ENCODE measurements at regions of chr3 and their contacts with region 1.

Region 1: DNA sequence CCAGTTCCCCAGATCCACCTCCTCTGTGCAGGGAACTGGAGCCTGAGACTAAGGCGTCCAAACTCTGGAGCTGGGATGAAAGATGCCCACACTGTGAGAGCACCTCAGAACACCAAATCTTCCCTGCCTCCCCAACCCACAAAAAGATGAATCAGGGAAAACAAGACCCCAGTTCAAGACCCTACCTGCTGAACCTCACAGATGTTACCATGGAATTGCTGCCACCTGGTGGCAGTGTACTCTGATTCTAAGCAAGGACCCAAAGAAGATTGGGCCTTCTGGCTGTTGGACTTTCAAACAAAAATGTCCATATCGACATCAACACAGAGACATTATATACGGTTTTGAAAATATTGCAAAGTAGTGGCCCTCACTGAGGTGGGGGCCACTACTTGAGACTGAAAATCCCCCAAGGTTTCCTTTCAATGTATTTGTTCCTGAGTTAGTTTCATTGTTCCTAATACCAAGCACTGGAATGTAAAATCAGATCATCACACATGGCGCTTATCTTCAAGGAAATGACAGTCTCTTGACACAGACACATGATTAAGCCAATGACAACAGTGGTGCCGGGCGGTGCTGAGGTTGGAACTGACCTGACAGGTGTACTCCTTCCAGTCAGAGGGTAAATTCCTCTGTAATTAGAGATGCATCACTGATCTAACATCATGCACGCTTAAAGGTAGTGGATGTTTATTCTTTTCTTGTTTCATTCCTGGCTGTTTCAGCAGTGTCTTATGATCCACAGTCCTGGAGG is 67.6 kb downstream of the SLC6A11 start:
- DNase-seq: no peak
- ATAC-seq: no peak
- H3K4me3 ChIP-seq: no peak overlapping the region
- H3K27ac ChIP-seq: no peak overlapping the region
- H3K4me1 ChIP-seq: no peaks in the 10 kb centered on the region
- H3K27me3 ChIP-seq: peaks cover 14% of the 10 kb centered on the region
- CTCF ChIP-seq: peak; percentile 68

Region 2: GRCh38 chr3:10758304-10759061 is 125.2 kb before region 1 on chr3:
- CTCF ChIA-PET with region 1: interaction called, 3 read pairs
- POLR2A ChIA-PET with region 1: no interaction called
- in situ Hi-C with region 1: no loop called
- intact Hi-C with region 1: loop called (anchors 2 kb)
- DNase-seq: peak; percentile 38
- ATAC-seq: peak; percentile 94
- H3K4me3 ChIP-seq: no peak overlapping the region
- H3K27ac ChIP-seq: no peak overlapping the region
- H3K4me1 ChIP-seq: no peaks in the 10 kb centered on the region
- H3K27me3 ChIP-seq: peaks cover 3% of the 10 kb centered on the region; the same call in 1 of the 2 replicates
- CTCF ChIP-seq: peak; percentile 68

Region 3: GRCh38 chr3:10772271-10773161 is 111.1 kb before region 1 on chr3:
- CTCF ChIA-PET with region 1: no interaction called
- POLR2A ChIA-PET with region 1: no interaction called
- in situ Hi-C with region 1: no loop called
- intact Hi-C with region 1: loop called (anchors 2 kb)
- DNase-seq: no peak
- ATAC-seq: peak; percentile 86
- H3K4me3 ChIP-seq: no peak overlapping the region
- H3K27ac ChIP-seq: no peak overlapping the region
- H3K4me1 ChIP-seq: no peaks in the 10 kb centered on the region
- H3K27me3 ChIP-seq: peaks cover 3% of the 10 kb centered on the region; the same call in 1 of the 2 replicates
- CTCF ChIP-seq: peak; percentile 77